MCF 10A (cell line): ENCODE measurements at regions of chr2 and their contacts with region 1.

Region 1: DNA sequence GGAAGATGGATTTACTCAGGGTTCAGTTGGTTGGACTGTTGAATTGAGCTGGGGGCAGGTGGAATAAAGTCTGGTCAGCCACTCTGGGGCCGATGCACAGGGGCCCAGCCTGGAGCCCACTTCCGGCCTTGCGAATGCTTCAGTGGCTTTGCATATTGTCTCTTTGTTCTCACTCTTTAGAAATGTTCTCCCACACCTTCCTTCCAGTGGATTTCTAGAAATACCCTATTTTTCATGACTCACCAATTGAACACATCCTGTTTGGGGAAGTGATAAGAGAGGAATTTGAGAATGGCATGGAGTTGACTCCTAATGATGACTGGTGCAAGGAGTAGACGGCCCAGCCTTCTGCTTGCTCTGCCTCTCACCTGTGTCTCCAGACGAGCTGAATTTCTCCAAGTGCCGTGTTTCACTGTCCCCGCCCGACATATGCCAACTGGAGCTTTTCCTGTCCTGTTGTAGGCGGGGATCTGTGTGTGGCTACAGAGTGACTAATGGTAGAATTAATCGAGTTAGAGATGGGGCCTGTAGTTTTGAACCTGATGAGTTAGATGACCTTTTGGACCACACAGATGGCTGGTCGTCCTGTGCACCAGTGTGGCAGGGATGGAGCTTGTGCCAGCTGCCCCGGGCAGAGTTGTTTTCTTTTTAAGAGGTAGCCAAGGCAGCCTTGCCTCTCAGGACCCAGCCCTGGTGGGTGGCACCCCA is 28.2 kb downstream of the ASAP2 start:
- DNase-seq: peak; percentile 90
- H3K4me3 Mint-ChIP-seq: peak overlapping the region; percentile 67
- H3K27ac Mint-ChIP-seq: peak overlapping the region; percentile 97
- H3K4me1 Mint-ChIP-seq: peaks cover 66% of the 10 kb centered on the region
- H3K27me3 Mint-ChIP-seq: no peaks in the 10 kb centered on the region
- CTCF ChIP-seq: no peak

Region 2: GRCh38 chr2:9003616-9004337 is 231.1 kb before region 1 on chr2 and contains the start of gene MBOAT2:
- CTCF ChIA-PET with region 1: no interaction called
- POLR2A ChIA-PET with region 1: no interaction called
- intact Hi-C with region 1: loop called (anchors 10 kb)
- DNase-seq: peak; percentile 84
- H3K4me3 Mint-ChIP-seq: peak within 1 kb of the TSS; percentile 83
- H3K27ac Mint-ChIP-seq: peak within 1 kb of the TSS; percentile 78
- H3K4me1 Mint-ChIP-seq: peaks cover 35% of the 10 kb centered on the region
- H3K27me3 Mint-ChIP-seq: no peaks in the 10 kb centered on the region
- CTCF ChIP-seq: no peak
- total RNA-seq, gene MBOAT2: 30.1 and 34.7 TPM in 2 replicates

Region 3: DNA sequence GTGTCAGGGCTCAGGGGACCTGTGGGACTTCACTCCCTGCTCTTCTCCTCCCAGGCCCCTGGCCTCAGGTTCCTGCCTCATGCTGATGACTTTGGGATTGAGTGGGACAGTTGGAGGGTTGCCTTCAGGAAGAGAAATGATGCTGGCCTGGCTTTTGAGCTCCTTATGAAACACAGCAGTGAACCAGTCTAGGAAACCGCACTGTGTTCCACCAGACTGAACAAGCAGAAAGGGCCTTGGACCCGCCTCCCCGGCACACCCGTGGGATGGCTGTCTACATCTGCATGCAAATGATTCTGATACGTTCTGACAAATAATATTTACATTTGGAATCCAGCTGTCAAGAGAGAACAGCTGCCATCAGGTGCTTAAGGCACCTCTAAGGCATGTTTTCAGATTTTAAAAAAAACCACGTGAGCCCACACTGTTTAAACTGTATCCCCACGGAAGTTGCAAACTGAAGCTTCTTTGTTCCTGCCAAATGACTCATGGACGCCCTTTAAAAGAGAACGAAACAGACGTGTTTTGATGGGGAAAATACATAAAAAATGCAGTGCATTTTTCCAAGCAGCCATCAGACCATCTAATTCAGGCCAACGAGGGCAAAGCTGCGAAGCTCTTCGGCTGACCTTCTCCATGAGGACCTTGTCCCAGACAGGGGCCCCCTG is 55.8 kb before region 1 on chr2:
- CTCF ChIA-PET with region 1: interaction called, 4 read pairs
- POLR2A ChIA-PET with region 1: interaction called, 13 read pairs
- intact Hi-C with region 1: no loop called
- DNase-seq: peak; percentile 64
- H3K4me3 Mint-ChIP-seq: peak overlapping the region; percentile 35
- H3K27ac Mint-ChIP-seq: peak overlapping the region; percentile 88
- H3K4me1 Mint-ChIP-seq: peaks cover 44% of the 10 kb centered on the region
- H3K27me3 Mint-ChIP-seq: no peaks in the 10 kb centered on the region
- CTCF ChIP-seq: no peak

Region 4: GRCh38 chr2:9217838-9218770 is 16.7 kb before region 1 on chr2:
- CTCF ChIA-PET with region 1: interaction called, 9 read pairs
- POLR2A ChIA-PET with region 1: interaction called, 18 read pairs
- intact Hi-C with region 1: no loop called
- DNase-seq: no peak
- H3K4me3 Mint-ChIP-seq: no peak overlapping the region
- H3K27ac Mint-ChIP-seq: peak overlapping the region; percentile 59
- H3K4me1 Mint-ChIP-seq: peaks cover 45% of the 10 kb centered on the region
- H3K27me3 Mint-ChIP-seq: no peaks in the 10 kb centered on the region
- CTCF ChIP-seq: no peak

Region 5: DNA sequence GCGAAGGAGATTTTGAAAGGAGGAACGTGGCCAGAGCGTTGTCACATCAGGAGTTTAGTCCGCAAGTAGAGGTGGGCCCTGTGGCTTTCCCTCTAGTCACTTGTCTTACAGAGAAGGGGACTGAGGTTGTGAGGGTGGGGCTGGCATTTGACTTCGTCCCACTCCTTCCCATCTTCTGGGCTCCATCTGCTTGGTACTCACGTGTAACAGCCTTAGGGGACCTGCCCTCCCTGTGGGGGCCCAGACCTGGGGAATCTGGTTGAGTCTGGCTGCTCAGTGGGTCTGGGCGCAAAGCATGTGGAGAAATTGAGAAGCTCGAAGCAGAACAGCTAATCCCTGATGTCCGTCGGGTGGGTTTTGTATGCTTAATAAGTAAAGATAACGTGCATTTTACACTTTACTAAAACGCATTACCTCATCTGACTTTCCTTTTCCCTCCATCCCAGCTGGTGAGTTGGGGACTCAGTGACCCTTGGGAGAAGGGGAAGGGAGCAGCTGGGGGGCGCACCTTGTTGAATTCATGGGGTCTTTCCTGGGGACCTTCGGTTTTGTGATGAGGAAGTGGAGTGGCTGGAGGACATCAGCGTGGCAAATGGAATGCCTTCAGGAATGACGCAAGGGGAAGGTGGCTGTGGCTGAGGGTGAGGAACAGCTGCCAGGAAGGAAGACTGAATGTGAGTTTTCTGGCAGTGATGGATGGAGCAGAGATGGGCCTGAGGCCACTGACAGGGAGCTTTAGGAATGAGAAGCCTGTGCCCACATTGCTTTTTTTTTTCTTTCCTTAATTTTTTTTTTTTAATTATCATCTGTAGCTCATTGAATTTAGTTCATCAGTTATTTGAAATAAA is 16.5 kb after region 1 on chr2:
- CTCF ChIA-PET with region 1: interaction called, 9 read pairs
- POLR2A ChIA-PET with region 1: interaction called, 142 read pairs
- intact Hi-C with region 1: loop called (anchors 1 kb)
- DNase-seq: peak; percentile 95
- H3K4me3 Mint-ChIP-seq: peak overlapping the region; percentile 65
- H3K27ac Mint-ChIP-seq: peak overlapping the region; percentile 90
- H3K4me1 Mint-ChIP-seq: peaks cover 70% of the 10 kb centered on the region
- H3K27me3 Mint-ChIP-seq: no peaks in the 10 kb centered on the region
- CTCF ChIP-seq: no peak

Region 6: GRCh38 chr2:9310377-9310776 is 75.5 kb after region 1 on chr2:
- CTCF ChIA-PET with region 1: interaction called, 4 read pairs
- POLR2A ChIA-PET with region 1: interaction called, 16 read pairs
- intact Hi-C with region 1: loop called (anchors 2 kb)
- DNase-seq: peak; percentile 88
- H3K4me3 Mint-ChIP-seq: peak overlapping the region; percentile 39
- H3K27ac Mint-ChIP-seq: peak overlapping the region; percentile 85
- H3K4me1 Mint-ChIP-seq: peaks cover 54% of the 10 kb centered on the region
- H3K27me3 Mint-ChIP-seq: no peaks in the 10 kb centered on the region
- CTCF ChIP-seq: no peak

Region 7: GRCh38 chr2:9423100-9423921 is 188.5 kb after region 1 on chr2 and contains the starts of genes CPSF3 and ITGB1BP1:
- CTCF ChIA-PET with region 1: interaction called, 3 read pairs
- POLR2A ChIA-PET with region 1: interaction called, 15 read pairs
- intact Hi-C with region 1: no loop called
- DNase-seq: peak; percentile 98
- H3K4me3 Mint-ChIP-seq: no peak within 1 kb of the TSS
- H3K27ac Mint-ChIP-seq: peak within 1 kb of the TSS; percentile 94
- H3K4me1 Mint-ChIP-seq: peaks cover 20% of the 10 kb centered on the region
- H3K27me3 Mint-ChIP-seq: no peaks in the 10 kb centered on the region
- CTCF ChIP-seq: no peak
- total RNA-seq, gene CPSF3: 51.0 and 51.6 TPM in 2 replicates
- total RNA-seq, gene ITGB1BP1: 124 and 125 TPM in 2 replicates